ENCODE measurements at regions of chrX and their contacts with region 1.

Region 1: DNA sequence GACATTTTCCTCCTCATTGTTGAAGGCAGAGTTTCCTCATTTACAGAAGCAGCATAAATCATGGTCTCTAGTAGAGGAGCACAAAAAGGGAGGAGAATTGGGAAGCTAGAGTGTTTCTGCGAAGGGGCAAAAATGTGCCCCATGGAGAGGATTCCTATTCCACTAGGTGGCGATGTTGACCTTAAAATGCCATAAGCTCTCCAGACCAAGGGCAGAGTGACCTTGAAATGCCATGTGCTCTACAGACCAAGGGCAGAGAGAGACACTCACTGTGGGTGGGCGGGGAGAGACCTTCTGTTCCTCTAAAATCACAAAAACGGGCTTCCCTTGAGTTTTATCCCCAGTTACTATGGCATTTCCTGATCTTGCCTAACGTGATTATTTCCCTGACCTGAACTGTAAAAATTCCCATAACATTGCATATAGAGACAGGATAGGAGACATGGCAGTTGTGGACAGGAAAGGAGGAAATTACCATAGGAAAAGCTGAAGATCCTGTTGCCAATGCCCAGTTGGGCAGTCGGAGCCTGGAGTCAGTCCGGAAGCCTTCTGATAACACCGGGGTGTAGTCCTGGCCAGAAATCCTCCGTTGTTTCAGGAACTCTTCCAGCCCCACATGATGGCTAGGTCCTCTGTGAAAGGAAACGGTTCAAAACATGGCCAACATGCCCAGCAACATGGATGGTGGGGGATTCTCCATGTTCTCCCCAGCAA is 567.7 kb downstream of the MAGEB5 start:
- DNase-seq: peak; percentile 29
- ATAC-seq: peak; percentile 75
- H3K4me3 ChIP-seq: no peak overlapping the region
- H3K27ac ChIP-seq: no peak overlapping the region
- H3K4me1 ChIP-seq: no peaks in the 10 kb centered on the region
- H3K27me3 ChIP-seq: no peaks in the 10 kb centered on the region
- CTCF ChIP-seq: peak; percentile 36 to 55 (median 43); a peak in 5 of 6 replicates
- POLR2A ChIP-seq: no peak
- RAD21 ChIP-seq: peak; percentile 62

Region 2: GRCh38 chrX:27186664-27187063 is 403.0 kb after region 1 on chrX:
- CTCF ChIA-PET with region 1: interaction called, 4 read pairs
- POLR2A ChIA-PET with region 1: no interaction called
- RAD21 ChIA-PET with region 1: no interaction called
- intact Hi-C with region 1: loop called (anchors 1 kb)
- DNase-seq: peak; percentile 3
- ATAC-seq: peak; percentile 25; the same call in 1 of the 2 replicates
- H3K4me3 ChIP-seq: no peak overlapping the region
- H3K27ac ChIP-seq: no peak overlapping the region
- H3K4me1 ChIP-seq: no peaks in the 10 kb centered on the region
- H3K27me3 ChIP-seq: no peaks in the 10 kb centered on the region
- CTCF ChIP-seq: peak; percentile 19 to 67 (median 53); a peak in 5 of 6 replicates
- POLR2A ChIP-seq: no peak
- RAD21 ChIP-seq: peak; percentile 51

Region 3: GRCh38 chrX:27336466-27337091 is 552.9 kb after region 1 on chrX:
- CTCF ChIA-PET with region 1: no interaction called
- POLR2A ChIA-PET with region 1: no interaction called
- RAD21 ChIA-PET with region 1: no interaction called
- intact Hi-C with region 1: loop called (anchors 5 kb)
- DNase-seq: peak; percentile 3
- ATAC-seq: no peak
- H3K4me3 ChIP-seq: no peak overlapping the region
- H3K27ac ChIP-seq: no peak overlapping the region
- H3K4me1 ChIP-seq: no peaks in the 10 kb centered on the region
- H3K27me3 ChIP-seq: no peaks in the 10 kb centered on the region
- CTCF ChIP-seq: peak; percentile 23 to 74 (median 66); a peak in 5 of 6 replicates
- POLR2A ChIP-seq: no peak
- RAD21 ChIP-seq: peak; percentile 37

Region 4: DNA sequence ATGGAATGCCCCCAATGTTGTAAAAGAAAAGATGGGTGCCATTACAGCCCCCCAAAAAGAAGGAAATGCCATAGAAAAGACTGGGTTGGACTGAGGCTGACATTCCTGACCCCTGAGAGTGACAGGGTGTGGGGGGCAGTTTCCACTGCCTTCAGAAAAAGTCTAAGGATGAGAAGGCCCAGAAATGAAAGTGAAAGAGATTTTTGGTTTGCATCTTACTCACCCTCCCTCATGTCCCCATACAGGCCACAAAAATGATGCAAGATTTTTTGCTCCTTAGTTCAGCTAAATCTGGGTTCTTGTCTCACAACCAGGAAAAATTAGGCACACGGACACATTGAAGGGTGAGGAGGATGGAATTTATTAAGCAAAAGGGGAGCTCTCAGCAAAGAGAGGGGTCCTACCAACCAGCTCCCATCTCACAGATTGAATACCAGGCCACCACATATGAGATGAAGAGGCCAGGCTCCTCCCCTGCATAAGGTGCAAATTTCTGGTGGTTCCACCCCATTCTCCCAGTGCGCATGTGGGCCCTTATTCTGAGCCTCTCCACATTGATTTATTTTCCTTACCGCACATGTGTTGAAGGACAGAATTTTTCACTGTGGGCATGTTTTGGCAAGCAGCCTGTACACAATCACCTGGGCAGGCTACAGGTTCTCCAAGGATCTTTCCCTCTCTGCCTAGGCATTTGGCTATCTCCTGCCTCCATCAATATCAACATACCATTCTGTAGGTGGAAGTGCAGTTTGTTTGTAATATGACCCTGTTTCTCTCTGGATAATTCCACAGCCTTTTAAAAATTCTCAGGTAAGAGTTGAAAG is 660.6 kb after region 1 on chrX:
- CTCF ChIA-PET with region 1: no interaction called
- POLR2A ChIA-PET with region 1: no interaction called
- RAD21 ChIA-PET with region 1: no interaction called
- intact Hi-C with region 1: loop called (anchors 10 kb)
- DNase-seq: no peak
- ATAC-seq: no peak
- H3K4me3 ChIP-seq: no peak overlapping the region
- H3K27ac ChIP-seq: no peak overlapping the region
- H3K4me1 ChIP-seq: no peaks in the 10 kb centered on the region
- H3K27me3 ChIP-seq: no peaks in the 10 kb centered on the region
- CTCF ChIP-seq: no peak
- POLR2A ChIP-seq: no peak
- RAD21 ChIP-seq: no peak

Measured in HCT116 (cell line).